ENCODE measurements at regions of chr4 and their contacts with region 1.

Region 1: GRCh38 chr4:6986781-6987587 is 56.2 kb upstream of the TADA2B start:
- DNase-seq: peak; percentile 98
- ATAC-seq: peak; percentile 97

Region 2: DNA sequence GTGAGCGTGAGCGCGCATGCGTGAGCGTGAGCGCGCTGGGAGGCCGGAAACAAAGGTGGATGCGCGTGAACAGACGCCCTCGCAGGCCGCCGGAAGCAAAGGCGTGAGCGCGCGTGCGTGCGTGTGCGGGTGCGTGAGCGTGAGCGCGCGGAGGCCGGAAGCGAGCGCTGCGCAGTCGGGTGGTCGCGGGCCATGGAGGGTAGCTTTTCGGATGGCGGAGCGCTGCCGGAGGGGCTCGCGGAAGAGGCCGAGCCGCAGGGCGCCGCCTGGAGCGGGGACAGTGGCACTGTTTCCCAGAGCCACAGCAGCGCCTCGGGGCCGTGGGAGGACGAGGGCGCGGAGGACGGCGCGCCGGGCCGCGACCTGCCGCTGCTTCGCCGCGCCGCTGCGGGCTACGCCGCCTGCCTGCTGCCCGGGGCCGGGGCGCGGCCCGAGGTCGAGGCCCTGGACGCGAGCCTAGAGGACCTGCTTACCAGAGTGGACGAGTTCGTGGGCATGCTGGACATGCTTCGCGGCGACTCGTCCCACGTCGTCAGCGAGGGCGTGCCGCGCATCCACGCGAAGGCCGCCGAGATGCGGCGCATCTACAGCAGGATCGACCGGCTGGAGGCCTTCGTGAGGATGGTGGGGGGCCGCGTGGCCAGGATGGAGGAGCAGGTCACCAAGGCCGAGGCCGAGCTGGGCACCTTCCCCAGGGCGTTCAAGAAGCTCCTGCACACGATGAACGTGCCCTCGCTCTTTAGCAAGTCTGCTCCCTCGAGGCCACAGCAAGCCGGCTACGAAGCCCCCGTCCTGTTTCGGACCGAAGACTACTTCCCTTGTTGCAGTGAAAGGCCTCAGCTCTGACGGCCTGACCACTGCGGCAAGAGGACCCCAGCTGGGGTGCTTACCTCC is 270.7 kb before region 1 on chr4 and contains the start of gene BLOC1S4:
- intact Hi-C with region 1: loop called (anchors 5 kb)
- DNase-seq: peak; percentile 96
- ATAC-seq: peak; percentile 94
- total RNA-seq, gene BLOC1S4: 6.0 TPM

Region 3: GRCh38 chr4:6909073-6909965 is 77.7 kb before region 1 on chr4 and contains the start of gene TBC1D14:
- intact Hi-C with region 1: loop called (anchors 2 kb)
- DNase-seq: peak; percentile 94
- ATAC-seq: peak; percentile 94
- total RNA-seq, gene TBC1D14: 36.1 TPM

Region 4: DNA sequence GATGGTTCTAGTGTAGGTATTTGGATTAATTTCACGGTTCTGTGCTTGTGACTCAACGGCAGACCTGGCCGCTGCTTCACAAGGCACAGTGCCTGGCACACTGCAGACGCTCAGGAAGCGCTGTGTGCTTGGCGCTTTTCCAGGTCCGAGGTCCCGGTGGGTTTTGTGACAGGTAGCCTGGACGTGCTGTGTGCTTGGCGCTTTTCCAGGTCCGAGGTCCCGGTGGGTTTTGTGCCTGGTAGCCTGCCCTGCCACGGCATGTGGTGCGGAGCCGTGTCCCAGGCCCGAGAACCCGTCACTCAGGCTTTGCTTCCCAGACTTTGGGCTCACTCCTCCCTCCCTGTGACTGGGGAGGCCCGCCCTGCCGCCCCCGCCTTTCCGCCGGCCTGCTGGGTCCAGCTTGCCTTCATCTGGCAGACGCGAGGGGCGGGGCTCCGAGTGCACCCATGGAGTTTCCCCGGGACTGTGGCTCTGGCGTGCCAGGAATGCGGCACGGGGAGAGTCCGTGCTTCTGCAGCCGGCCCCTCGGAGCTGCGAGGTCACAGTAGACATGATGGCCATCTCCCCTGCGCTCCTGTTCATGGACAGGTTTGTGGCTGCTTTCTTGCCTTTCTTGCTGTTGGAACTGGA is 33.1 kb before region 1 on chr4:
- intact Hi-C with region 1: no loop called
- DNase-seq: peak; percentile 87
- ATAC-seq: peak; percentile 82

Region 5: GRCh38 chr4:7017446-7018330 is 30.7 kb after region 1 on chr4:
- intact Hi-C with region 1: loop called (anchors 1 kb)
- DNase-seq: no peak
- ATAC-seq: no peak

Region 6: GRCh38 chr4:7067452-7068278 is 80.7 kb after region 1 on chr4 and contains the start of gene GRPEL1:
- intact Hi-C with region 1: loop called (anchors 2 kb)
- DNase-seq: peak; percentile 100
- ATAC-seq: peak; percentile 99
- total RNA-seq, gene GRPEL1: 61.5 TPM

Region 7: DNA sequence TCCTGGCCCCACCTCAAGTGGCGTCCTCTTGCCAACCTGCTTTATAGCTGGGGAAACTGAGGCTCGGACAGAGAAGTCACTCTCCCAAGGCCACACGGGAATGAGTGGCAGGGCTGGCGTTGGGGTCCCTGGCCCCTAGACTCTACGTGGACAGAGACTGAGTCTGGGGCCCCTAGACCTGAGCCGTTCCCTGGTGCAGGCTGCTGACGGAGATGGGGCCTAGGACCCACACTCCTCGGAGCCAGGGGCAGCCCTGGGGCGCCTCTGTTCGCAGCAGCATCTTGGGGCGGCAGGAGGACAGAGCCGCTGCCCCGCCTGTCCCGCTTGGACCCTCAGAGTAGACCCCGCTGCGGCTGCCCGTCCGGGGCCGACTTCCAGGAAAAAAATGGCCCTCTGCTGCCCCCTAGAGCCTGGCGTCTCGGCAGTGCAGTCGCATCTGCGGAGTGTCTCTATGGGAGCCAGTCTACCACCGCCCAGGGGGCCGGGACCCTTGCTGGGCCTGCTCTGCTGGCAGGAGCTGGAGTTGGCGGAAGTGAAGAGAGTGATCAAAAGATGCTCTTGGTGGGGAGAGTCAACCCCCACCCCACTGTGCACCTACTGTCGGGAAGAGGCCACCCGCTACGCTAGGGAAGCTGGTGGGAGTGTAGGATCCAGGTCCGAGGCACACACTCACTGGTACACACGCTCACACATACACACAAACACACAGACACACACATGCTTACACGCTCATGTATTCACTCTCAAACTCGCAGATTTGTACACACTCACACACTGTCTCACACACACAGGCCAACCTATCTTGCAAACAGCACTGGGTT is 732.6 kb after region 1 on chr4:
- intact Hi-C with region 1: no loop called
- DNase-seq: peak; percentile 73
- ATAC-seq: peak; percentile 58

Measured in Right ventricle myocardium inferior (tissue), 1 donor.